B cell (primary cell): ENCODE measurements at regions of chr2 and their contacts with region 1.

Region 1: DNA sequence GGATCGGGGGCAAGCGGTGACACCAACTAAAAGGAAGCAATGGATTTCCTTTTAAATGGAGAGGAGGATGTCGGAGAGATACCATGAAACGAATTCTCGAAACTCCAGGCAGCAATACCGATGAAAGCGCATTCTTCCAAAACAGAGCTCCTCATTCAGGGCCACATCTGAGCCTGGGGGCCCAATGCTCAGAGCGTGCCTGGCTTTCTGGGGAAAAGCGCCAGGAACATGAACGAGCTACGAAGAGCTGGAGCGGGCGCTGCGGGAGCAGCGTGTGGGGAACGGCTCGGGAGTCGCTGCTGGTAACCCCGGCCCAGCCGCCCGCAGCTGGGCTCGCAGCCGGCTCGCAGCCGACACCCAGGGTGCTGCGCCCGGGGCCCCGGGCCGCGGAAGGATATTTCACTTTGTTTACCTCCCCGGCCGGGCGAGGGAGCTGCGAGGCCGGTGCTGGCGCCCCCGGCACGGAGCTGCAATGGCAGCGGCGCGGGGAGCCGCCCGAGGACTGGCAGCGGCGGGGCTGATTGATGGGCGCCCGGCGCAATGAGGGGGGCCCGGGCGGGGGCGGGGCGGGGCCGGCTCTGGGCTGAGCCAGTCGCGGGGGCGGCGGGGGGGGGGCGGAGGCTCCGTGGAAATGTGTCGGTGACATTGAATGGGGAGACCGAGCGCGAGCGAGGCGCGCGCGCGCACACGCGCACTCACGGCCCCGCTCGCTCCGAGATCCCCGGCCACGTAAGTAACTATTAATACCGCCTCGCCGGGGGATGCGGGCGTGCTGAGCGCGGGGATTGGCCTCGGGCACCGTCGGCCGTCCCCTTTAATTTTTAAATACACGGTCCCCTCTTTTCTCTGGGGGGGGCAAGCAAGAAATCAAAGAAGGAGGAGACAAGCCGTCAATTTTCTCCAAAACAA is at the start of gene TRIB2:
- DNase-seq: peak; percentile 94
- ATAC-seq: peak; percentile 83
- H3K4me3 ChIP-seq: peak within 1 kb of the TSS; percentile 79 to 99 (median 93)
- H3K4me3 Mint-ChIP-seq: peak within 1 kb of the TSS; percentile 93
- H3K27ac ChIP-seq: peak within 1 kb of the TSS; percentile 79 to 89
- H3K27ac Mint-ChIP-seq: peak within 1 kb of the TSS; percentile 92
- H3K4me1 ChIP-seq: peaks cover 31 to 36% of the 10 kb centered on the region in 2 donors
- H3K4me1 Mint-ChIP-seq: peaks cover 47% of the 10 kb centered on the region
- H3K27me3 ChIP-seq: no peaks in the 10 kb centered on the region
- H3K27me3 Mint-ChIP-seq: no peaks in the 10 kb centered on the region
- CTCF ChIP-seq: peak; percentile 63
- total RNA-seq, gene TRIB2: 35.0 and 36.3 TPM in 2 replicates

Region 2: GRCh38 chr2:10812362-10813162 is 1904.0 kb before region 1 on chr2 and contains the start of gene PDIA6:
- CTCF ChIA-PET with region 1: no interaction called
- POLR2A ChIA-PET with region 1: no interaction called
- intact Hi-C with region 1: loop called (anchors 5 kb)
- DNase-seq: peak; percentile 97
- ATAC-seq: peak; percentile 86
- H3K4me3 ChIP-seq: peak within 1 kb of the TSS; percentile 62 to 97 (median 72)
- H3K4me3 Mint-ChIP-seq: peak within 1 kb of the TSS; percentile 92
- H3K27ac ChIP-seq: peak within 1 kb of the TSS; percentile 71 to 80
- H3K27ac Mint-ChIP-seq: peak within 1 kb of the TSS; percentile 93
- H3K4me1 ChIP-seq: peaks cover 30 to 40% of the 10 kb centered on the region in 2 donors
- H3K4me1 Mint-ChIP-seq: peaks cover 39% of the 10 kb centered on the region
- H3K27me3 ChIP-seq: no peaks in the 10 kb centered on the region
- H3K27me3 Mint-ChIP-seq: no peaks in the 10 kb centered on the region
- CTCF ChIP-seq: no peak
- total RNA-seq, gene PDIA6: 47.9 and 53.8 TPM in 2 replicates

Region 3: DNA sequence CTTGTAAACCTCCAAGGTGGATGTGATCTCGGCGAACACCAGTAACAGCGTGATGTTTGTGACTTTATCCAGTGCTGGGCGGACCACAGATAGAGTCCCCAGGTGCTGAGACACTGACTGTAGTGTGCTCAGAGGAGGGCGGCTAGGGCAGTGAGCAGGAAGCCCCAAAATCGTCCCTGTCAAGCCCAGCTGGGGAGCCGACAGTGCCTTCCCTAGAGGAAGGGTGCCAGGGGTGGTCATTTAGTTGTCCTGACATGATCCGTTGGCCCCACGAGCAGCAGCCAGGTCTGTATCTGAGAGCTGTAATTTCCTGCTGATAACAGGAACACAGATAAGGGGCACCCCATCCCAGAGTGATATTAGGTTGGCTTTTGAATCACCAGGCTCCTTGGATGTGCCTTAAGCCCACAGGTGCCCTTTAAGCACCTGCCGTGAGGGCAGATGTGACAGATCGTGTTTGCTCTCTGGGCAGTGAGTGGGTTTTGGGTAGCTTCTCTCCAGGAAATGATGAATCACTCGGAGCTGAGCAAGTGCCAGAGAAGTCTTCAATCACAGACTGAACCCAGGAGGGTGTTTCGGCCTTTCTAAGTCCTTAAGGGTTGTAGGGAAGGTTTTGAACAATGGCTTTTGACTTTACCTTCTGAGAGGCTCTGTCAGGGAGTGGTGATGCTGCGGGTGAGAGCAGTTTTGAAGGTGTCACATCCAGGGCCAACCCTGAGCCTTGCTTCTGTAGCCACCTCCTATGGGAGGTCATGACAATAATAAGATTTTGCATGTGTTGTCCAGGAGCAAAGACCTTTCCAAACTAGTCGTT is 962.4 kb before region 1 on chr2:
- CTCF ChIA-PET with region 1: interaction called, 4 read pairs
- POLR2A ChIA-PET with region 1: interaction called, 4 read pairs
- intact Hi-C with region 1: loop called (anchors 2 kb)
- DNase-seq: no peak
- ATAC-seq: peak; percentile 40
- H3K4me3 ChIP-seq: peak overlapping the region; percentile 6 to 58 (median 46)
- H3K4me3 Mint-ChIP-seq: peak overlapping the region; percentile 94
- H3K27ac ChIP-seq: peak overlapping the region; percentile 71 to 89
- H3K27ac Mint-ChIP-seq: peak overlapping the region; percentile 98
- H3K4me1 ChIP-seq: peaks cover 70 to 94% of the 10 kb centered on the region in 2 donors
- H3K4me1 Mint-ChIP-seq: peaks cover 88% of the 10 kb centered on the region
- H3K27me3 ChIP-seq: no peaks in the 10 kb centered on the region
- H3K27me3 Mint-ChIP-seq: no peaks in the 10 kb centered on the region
- CTCF ChIP-seq: no peak

Region 4: DNA sequence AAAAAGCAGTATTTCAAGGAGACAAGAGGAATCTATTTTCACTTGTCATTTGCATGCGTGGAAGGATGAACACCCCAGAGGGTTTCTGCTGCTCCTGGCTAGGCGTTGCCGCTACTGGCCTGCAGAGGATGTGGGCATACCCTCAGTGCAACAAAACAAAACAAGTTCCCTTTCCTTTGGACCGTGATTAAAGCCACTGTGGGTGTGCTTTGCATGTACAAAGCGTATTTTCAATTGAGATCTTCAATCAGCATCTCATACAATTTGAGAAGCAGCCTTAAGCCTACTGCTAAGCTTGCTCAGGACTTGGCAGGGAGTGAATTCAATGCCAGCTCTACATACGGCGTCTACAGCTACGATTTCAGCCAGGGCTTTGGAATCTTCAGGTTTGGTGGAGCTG is 671.7 kb before region 1 on chr2:
- CTCF ChIA-PET with region 1: interaction called, 10 read pairs
- POLR2A ChIA-PET with region 1: interaction called, 5 read pairs
- intact Hi-C with region 1: loop called (anchors 5 kb)
- DNase-seq: peak; percentile 78
- ATAC-seq: peak; percentile 96
- H3K4me3 ChIP-seq: peak overlapping the region in 3 of 5 experiments; percentile 27 to 61 (median 43)
- H3K4me3 Mint-ChIP-seq: peak overlapping the region; percentile 26
- H3K27ac ChIP-seq: peak overlapping the region; percentile 76 to 79
- H3K27ac Mint-ChIP-seq: peak overlapping the region; percentile 70
- H3K4me1 ChIP-seq: peaks cover 85 to 86% of the 10 kb centered on the region in 2 donors
- H3K4me1 Mint-ChIP-seq: peaks cover 88% of the 10 kb centered on the region
- H3K27me3 ChIP-seq: no peaks in the 10 kb centered on the region
- H3K27me3 Mint-ChIP-seq: no peaks in the 10 kb centered on the region
- CTCF ChIP-seq: no peak

Region 5: DNA sequence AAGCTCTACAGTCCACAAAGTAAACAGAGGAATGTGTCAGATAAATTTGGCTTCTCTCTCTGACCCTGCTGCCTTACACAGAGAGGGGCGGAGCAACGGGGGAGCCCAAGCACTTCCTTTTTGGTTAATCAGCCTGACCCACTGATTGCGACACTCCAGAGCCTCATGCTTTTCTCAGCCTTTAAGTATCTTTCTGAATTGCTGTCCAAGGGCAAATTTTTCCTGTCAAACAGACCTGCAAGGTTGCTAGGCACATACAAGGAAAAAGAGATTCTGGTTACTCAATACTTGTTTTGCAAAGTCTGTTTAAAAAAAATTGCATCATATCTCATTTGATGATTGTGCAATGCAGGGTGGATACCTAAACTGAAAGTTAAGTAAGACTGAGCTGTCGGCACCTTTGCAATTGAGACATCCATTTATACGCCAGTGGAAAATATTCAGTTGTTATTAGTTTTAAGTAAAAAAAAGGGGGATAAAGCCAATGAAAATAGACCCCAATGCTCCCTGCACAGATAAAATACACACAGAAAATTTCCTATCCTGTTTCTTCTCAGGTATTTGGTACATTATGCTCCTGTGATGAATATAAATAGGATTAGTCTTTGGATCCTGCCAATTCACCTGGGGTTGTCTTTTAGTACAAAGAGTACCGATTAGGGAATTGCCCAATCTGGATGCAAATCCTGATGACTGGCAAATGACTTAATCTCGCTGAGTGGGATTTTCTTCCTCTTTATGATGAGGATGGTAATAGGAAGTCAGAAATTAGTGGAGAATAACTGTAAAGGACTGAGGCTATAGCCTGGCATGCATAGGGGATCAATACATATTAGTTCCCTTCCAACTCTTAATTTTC is 260.0 kb before region 1 on chr2:
- CTCF ChIA-PET with region 1: interaction called, 11 read pairs
- POLR2A ChIA-PET with region 1: no interaction called
- intact Hi-C with region 1: no loop called
- DNase-seq: peak; percentile 62
- ATAC-seq: peak; percentile 89
- H3K4me3 ChIP-seq: peak overlapping the region; percentile 39 to 65 (median 56)
- H3K4me3 Mint-ChIP-seq: peak overlapping the region; percentile 90
- H3K27ac ChIP-seq: peak overlapping the region in 1 of 2 donors; percentile 59
- H3K27ac Mint-ChIP-seq: peak overlapping the region; percentile 83
- H3K4me1 ChIP-seq: peaks cover 12 to 13% of the 10 kb centered on the region in 2 donors
- H3K4me1 Mint-ChIP-seq: peaks cover 21% of the 10 kb centered on the region
- H3K27me3 ChIP-seq: no peaks in the 10 kb centered on the region
- H3K27me3 Mint-ChIP-seq: no peaks in the 10 kb centered on the region
- CTCF ChIP-seq: no peak

Region 6: DNA sequence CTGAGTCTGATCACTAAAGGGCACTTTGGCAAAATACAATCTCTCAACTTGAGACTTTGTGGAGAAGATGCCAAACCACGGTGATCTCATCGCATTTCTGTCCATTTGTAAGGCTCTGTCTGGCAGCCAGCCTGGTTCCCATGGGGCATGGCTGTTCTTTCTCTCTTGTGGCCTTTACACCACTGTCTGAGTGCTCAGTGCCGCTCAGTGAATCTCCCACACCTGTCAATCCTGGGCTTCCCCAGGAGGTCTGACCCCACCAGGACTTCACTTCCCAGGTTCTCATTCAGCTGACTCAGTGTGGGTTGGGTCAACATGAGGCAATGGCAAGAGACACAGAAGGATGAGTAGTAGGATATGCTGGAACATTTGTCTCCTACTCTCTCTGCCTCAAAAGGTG is 96.6 kb before region 1 on chr2:
- CTCF ChIA-PET with region 1: interaction called, 3 read pairs
- POLR2A ChIA-PET with region 1: no interaction called
- intact Hi-C with region 1: loop called (anchors 10 kb)
- DNase-seq: no peak
- ATAC-seq: no peak
- H3K4me3 ChIP-seq: no peak overlapping the region
- H3K4me3 Mint-ChIP-seq: no peak overlapping the region
- H3K27ac ChIP-seq: no peak overlapping the region
- H3K27ac Mint-ChIP-seq: no peak overlapping the region
- H3K4me1 ChIP-seq: peaks cover 19 to 22% of the 10 kb centered on the region in 2 donors
- H3K4me1 Mint-ChIP-seq: peaks cover 24% of the 10 kb centered on the region
- H3K27me3 ChIP-seq: peaks cover 0 to 11% (median 6%) of the 10 kb centered on the region in 4 experiments
- H3K27me3 Mint-ChIP-seq: peaks cover 5% of the 10 kb centered on the region
- CTCF ChIP-seq: no peak